ENCODE measurements at regions of chr5 and their contacts with region 1.

Region 1: DNA sequence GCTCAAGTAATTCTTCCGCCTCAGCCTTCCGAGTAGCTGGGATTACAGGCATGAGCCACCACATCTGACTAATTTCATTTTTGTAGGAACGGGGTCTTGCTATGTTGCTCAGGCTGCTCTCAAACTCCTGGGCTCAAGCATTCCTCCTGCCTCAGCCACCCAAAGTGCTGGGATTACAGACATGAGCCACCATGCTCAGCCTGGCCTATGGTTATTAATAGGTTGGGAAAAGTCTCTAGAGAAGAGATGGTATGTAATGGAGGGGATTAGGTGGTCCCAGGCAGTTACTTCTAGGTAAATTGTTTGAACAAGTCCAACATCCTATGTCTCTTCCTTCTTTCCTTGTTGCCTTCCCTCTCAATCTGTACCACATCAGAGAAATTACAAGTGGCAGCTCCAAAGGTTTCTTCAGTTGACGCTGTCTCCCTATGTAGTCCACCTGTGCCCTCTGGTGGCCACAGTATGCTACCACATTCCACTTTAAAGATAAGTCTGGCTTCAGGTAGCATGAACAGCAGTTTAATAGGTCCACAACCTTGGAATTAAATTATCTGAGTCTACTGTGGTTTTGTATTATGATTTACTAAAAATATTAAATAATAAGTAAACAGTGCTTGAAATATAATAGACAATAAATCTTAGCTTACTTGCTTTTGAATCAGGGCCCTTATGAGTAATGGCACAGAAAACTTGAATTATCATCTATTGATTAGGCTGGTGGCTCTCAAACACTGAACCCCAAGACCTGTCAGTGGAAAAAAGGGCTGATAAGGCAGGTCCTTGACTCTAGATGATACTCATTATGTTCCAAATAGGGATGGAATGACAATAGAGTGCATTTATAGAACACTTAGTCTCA is 9.7 kb downstream of the TIGD6 start:
- DNase-seq: peak; percentile 95

Region 2: DNA sequence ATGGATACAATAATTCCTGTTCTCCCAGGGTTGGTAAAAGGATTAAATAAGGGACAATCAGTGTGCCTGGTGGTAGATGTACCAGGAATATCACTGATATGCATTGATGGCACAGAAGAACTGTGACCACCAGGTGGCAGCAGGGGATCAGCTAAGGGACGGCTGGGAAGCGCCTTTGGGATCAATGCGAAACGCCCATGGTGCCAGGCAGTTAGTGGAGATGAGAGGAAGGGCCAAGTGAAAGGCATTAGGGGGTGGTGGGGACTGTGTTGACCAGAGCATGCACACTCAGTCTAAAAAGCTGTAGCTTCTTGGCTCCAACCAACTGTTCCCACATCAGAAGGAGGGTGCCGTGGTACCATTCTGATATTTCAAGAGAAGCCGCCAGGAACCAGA is 353.9 kb before region 1 on chr5:
- in situ Hi-C with region 1: loop called (anchors 25 kb)
- DNase-seq: peak; percentile 85

Region 3: DNA sequence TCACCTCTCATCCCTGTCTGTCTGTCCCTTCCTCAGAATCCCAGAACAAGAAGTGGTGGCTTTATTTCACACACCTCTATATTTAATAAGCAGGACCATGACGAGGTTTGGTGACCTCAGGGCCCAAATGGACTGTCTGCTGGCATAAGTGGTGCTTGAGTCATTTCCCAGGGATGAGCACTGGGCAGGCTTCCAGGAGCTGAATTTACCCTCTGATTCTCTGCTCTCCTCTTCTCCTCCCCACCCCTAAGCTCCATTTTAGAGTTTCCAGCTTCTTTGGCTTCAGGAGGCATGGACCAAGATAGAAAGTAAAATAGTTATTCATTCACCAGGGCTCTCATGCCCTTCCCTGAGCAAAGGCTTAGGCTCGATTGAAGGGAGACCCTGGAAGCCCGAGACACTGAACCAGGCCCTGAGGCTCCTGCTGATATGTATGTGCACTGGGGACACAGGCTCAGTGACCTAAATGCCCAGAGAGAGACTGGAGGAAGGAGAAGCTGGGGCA is 191.6 kb before region 1 on chr5:
- in situ Hi-C with region 1: no loop called
- DNase-seq: peak; percentile 88

Region 4: GRCh38 chr5:149887622-149888183 is 103.0 kb before region 1 on chr5:
- in situ Hi-C with region 1: no loop called
- DNase-seq: no peak